Left ventricle myocardium superior (tissue), 1 donor: ENCODE measurements at regions of chr18 and their contacts with region 1.

Region 1: GRCh38 chr18:35005963-35006577 is 35.1 kb upstream of the MAPRE2 start:
- DNase-seq: no peak
- ATAC-seq: peak; percentile 89

Region 2: GRCh38 chr18:35343936-35344735 is 338.1 kb after region 1 on chr18 and contains the start of gene ZNF24:
- intact Hi-C with region 1: loop called (anchors 10 kb)
- DNase-seq: peak; percentile 98
- ATAC-seq: peak; percentile 99
- total RNA-seq, gene ZNF24: 53.6 TPM